Aorta (tissue), 5 donors: ENCODE measurements at regions of chr7 and their contacts with region 1.

Region 1: DNA sequence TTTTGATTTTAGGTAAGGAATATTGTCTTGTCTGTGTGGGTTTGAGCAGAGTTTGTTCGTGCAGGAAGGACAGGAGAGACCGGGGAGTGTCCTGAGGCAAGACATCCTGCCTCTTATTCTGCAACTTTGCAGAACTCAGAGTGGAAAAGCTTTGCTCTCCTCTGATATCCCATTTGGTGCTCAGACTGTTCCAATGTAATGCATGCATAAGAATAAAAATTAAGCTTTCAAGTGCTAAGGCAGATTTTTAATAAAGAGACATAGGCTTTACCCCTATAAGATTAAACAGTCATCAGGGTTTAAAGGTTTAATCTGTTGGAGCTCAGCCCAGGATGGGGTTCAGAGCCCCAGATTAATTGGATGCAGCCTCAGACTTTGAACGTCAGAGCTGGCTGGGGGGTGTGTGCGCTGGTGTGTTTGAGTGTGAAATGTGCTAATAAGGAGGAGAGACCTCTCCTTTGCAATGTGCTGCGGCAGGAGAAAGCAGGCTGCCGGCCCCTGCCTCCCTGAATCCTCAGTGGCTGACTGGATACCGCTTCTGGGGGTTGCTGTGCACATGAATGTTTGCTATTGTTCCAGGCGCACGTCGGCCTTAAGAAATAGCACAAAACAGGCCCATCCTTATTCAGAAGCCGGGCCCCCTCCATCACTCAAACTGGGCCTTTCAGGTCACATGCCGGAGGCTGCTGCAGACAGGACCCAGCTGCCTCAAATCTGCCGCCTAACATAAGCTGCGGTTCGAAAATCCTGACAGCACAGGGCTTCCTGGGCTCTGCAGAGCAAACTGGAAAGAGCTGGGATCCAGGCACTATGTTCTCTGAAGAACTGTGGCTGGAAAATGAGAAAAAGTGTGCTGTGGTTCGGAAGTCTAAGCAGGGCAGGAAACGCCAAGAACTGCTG is 84.1 kb upstream of the PRR15 start:
- DNase-seq: no peak
- ATAC-seq: peak; percentile 31
- H3K4me3 ChIP-seq: no peak overlapping the region
- H3K27ac ChIP-seq: peak overlapping the region; percentile 78 to 82
- H3K4me1 ChIP-seq: no peaks in the 10 kb centered on the region
- H3K27me3 ChIP-seq: no peaks in the 10 kb centered on the region

Region 2: GRCh38 chr7:29564496-29565223 is 85.1 kb after region 1 on chr7:
- intact Hi-C with region 1: loop called in 1 of 2 experiments (anchors 5 kb)
- DNase-seq: peak; percentile 75 to 89
- ATAC-seq: peak; percentile 76
- H3K4me3 ChIP-seq: peak overlapping the region; percentile 59 to 66
- H3K27ac ChIP-seq: peak overlapping the region in 1 of 2 donors; percentile 12
- H3K4me1 ChIP-seq: no peaks in the 10 kb centered on the region
- H3K27me3 ChIP-seq: no peaks in the 10 kb centered on the region

Region 3: DNA sequence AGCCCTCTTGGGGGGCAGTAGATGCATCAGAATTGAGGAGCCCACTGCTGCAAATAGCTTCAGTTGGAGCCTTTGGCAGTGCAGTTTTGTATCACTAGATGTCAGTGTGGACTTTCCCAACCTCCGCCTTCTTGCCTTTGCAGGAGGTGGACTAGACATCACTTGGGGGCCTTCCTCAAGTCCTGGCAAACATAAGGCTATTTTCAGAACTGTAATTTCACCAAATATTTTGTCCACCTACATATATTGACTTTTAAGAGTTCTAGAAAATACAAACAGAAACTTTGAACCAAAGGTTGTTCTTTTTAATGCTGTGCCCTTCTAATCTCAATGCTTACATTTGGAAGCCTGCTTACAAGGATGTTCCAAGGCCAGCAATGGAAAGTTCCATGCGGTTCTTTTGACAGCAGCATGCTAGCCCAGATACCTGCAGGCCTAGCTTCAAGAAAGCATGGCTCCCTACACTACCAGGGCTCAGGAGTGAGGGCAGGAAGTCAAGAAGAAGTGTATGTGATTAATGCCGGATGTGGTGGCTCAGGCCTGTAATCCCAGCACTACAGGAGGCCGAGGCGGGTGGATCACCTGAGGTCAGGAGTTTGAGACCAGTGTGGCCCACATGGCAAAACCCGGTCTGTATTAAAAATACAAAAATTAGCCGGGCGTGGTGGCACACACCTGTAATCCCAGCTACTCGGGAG is 796.8 kb after region 1 on chr7:
- intact Hi-C with region 1: no loop called
- DNase-seq: no peak
- ATAC-seq: peak; percentile 46
- H3K4me3 ChIP-seq: no peak overlapping the region
- H3K27ac ChIP-seq: no peak overlapping the region
- H3K4me1 ChIP-seq: no peaks in the 10 kb centered on the region
- H3K27me3 ChIP-seq: no peaks in the 10 kb centered on the region